Activated CD8-positive, alpha-beta T cell treated with anti-CD3 and anti-CD28 coated beads for 36 hours (primary cell): ENCODE measurements at regions of chr11 and their contacts with region 1.

Region 1: DNA sequence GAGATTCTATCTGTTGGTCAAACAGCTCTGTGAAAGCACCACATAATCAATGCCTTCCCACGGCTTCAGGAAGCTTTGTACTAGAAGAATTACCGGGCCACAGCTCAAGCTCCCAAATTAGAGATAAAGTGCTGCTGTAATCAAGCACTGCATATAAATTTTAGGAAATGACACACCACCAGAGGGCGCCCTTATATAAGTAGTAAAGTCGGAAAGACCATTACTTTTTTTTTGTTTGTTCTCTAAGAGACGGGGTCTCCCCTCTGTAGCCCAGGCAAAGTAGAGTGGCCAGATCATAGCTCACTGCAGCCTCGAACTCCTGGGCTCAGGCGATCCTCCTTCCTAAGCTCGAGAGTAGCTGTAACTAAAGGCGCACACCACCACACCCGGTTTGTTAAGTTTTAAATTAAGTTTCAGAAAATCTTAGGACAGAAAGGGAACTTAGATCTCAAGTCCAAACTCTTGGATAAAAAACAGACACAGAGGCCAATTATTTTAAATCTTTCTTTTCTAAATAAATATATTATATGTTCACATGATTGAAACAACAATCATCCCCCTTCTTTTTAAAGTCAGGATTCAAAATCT is 32.6 kb downstream of the PRCP start:
- DNase-seq: peak; percentile 93
- ATAC-seq: peak; percentile 73
- H3K4me3 Mint-ChIP-seq: peak overlapping the region; percentile 17
- H3K27ac Mint-ChIP-seq: no peak overlapping the region
- H3K4me1 Mint-ChIP-seq: peaks cover 22% of the 10 kb centered on the region
- H3K27me3 Mint-ChIP-seq: no peaks in the 10 kb centered on the region
- CTCF ChIP-seq: peak; percentile 85

Region 2: DNA sequence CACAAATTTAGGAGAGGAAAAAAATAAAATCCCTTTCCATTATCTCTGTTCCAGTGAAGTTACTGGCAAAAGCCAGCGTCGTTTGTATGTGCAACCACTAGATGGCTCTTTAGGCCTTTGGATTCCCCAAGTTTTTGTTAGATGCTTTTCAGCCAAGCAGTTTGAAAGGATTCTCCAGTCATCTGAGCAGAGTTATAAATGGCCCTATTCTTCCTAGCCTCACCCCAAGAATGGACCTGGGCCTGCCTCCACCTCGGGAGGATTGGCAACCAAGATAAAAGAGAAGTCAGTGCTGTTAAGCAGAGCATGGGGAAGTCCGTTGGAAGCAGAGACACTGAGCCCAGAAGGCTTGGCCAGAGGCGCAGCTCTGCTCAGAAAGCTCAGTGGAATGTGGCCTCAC is 149.3 kb before region 1 on chr11:
- CTCF ChIA-PET with region 1: interaction called, 23 read pairs
- POLR2A ChIA-PET with region 1: no interaction called
- intact Hi-C with region 1: loop called (anchors 2 kb)
- DNase-seq: peak; percentile 34
- ATAC-seq: peak; percentile 45
- H3K4me3 Mint-ChIP-seq: no peak overlapping the region
- H3K27ac Mint-ChIP-seq: no peak overlapping the region
- H3K4me1 Mint-ChIP-seq: no peaks in the 10 kb centered on the region
- H3K27me3 Mint-ChIP-seq: peaks cover 1% of the 10 kb centered on the region
- CTCF ChIP-seq: peak; percentile 78

Region 3: DNA sequence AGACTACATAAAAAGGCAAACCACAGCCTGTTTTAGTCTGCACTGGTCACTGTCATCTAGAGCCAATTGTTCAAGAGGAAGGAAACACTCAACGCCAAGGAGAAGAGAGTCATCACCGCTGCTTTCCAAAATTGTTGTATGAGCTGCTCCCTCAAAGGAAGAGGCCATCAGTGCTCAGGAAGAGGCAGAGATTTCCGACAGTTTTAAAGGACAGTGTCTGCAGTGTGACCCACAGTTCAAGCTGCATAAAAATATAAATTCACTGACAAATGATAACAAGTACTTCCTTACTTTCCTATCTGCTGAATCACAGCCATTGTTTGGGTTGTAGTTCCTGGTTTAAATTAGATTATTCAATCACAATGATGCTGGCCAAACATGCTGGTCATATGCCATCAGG is 16.3 kb after region 1 on chr11:
- CTCF ChIA-PET with region 1: interaction called, 37 read pairs
- POLR2A ChIA-PET with region 1: interaction called, 3 read pairs
- intact Hi-C with region 1: no loop called
- DNase-seq: no peak
- ATAC-seq: no peak
- H3K4me3 Mint-ChIP-seq: no peak overlapping the region
- H3K27ac Mint-ChIP-seq: no peak overlapping the region
- H3K4me1 Mint-ChIP-seq: peaks cover 5% of the 10 kb centered on the region
- H3K27me3 Mint-ChIP-seq: no peaks in the 10 kb centered on the region
- CTCF ChIP-seq: no peak

Region 4: DNA sequence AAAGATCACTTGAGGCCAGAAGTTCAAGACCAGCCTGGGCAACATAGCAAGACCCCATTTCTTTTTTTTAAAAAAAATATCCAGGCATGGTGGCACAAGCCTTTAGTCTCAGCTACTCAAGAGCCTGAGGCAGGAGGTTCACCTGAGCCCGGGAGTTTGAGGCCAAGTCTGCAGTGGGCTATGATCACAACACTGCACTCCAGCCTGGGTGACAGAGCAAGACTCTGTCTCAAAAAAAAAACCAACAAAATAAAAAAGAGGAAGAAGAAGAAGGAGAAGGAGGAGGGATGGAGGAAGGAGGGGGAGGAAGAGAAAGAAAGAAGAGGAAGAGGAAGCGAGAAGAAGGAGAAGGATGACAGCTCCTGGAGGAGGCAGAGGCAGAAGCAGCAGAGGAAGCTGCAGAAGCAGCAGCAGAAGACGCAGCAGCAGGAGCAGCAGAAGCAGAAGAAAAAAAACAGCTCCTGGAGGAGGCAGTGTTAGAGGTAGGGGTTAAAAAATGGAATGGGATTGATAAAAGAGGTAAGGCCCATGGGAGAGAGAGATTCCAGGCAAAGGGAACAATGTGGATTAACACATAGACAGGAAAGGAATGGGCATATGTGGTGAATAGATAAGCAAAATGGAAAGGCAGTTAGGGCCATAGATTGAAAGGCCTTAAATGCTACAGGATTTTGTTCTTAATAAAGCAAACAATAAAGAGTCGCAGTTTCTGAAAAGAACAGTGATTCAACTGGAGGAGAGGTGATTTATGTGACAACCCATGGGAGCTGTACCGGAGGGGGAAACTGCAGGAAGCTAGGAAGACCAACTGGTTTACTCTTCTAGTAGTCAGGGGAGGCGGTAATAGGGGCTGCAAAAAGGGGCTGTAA is 21.8 kb after region 1 on chr11:
- CTCF ChIA-PET with region 1: interaction called, 37 read pairs
- POLR2A ChIA-PET with region 1: no interaction called
- intact Hi-C with region 1: no loop called
- DNase-seq: no peak
- ATAC-seq: no peak
- H3K4me3 Mint-ChIP-seq: no peak overlapping the region
- H3K27ac Mint-ChIP-seq: no peak overlapping the region
- H3K4me1 Mint-ChIP-seq: peaks cover 8% of the 10 kb centered on the region
- H3K27me3 Mint-ChIP-seq: no peaks in the 10 kb centered on the region
- CTCF ChIP-seq: no peak

Region 5: DNA sequence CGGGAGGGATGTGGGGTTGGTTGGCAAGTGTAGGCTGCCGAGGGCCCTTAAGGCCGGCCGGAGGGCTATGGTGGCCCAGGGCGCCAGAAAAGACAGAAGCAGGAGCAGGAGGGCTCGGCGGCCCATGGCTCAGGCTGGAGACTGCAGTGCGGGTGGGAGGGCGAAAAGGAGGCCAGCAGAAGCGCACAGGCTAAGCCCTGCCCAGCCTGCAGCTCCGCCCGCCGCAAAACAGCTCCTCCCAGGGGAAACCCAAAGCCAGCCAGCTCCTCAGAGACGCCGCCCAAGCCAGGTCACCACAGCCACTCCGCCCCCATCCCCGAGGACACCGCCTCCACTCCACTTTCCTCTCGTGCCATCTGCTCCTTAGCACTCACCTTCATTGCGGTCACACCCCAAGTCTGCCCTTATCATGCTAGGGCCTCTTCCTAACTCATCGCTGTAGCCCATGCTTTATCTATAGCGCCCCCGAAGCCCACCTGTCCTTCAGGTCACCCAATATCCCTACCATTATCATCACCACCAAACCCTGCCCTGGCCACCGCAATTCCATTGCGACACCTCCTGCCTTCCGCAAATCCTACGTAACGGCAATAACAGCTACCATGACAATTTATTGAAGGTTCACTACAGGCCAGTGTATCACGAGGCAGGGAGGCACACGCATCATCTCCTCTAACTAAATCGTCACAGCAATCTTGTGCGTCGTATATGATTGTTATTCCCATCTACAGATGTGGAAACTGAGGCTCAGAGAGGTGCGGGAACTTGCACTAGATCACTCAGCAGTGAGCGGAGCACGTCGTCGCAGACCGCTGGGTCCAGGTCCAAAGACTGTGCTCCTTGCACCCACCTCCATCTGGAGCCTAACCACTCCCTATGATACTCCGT is 32.9 kb after region 1 on chr11 and contains the start of gene PRCP:
- CTCF ChIA-PET with region 1: interaction called, 67 read pairs
- POLR2A ChIA-PET with region 1: no interaction called
- intact Hi-C with region 1: loop called (anchors 5 kb)
- DNase-seq: peak; percentile 98
- ATAC-seq: peak; percentile 80
- H3K4me3 Mint-ChIP-seq: peak within 1 kb of the TSS; percentile 79
- H3K27ac Mint-ChIP-seq: peak within 1 kb of the TSS; percentile 98
- H3K4me1 Mint-ChIP-seq: peaks cover 56% of the 10 kb centered on the region
- H3K27me3 Mint-ChIP-seq: no peaks in the 10 kb centered on the region
- CTCF ChIP-seq: no peak
- total RNA-seq, gene PRCP: 21.8 to 29.9 TPM

Region 6: DNA sequence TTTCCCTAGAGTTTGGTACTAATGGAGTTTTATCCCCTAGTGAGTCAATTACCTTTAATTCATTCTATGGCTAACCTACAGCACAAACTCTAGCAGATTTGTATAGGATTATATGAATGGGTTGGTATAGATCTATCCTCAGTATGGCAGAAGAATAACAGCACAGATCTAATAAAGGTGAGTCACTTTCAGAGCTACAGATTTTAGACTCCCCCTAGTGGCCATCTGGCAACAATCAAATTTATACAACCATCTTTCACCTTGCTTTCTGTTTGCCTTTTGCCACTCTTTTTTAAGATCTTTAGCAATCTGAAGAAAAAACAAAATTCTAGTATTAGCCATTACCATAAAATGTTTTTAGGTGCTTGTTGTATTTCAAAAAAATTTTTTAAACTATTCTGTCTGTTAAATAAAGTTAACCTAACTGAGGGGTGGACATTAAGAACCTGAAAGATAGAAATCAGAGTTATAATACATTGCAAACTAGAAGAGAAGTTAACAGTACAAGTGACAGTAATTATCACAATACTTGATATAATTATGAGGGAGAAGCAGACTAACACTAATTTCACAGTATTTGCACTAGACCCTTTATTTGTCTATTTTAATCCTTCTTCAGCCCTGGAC is 59.8 kb after region 1 on chr11:
- CTCF ChIA-PET with region 1: interaction called, 11 read pairs
- POLR2A ChIA-PET with region 1: no interaction called
- intact Hi-C with region 1: no loop called
- DNase-seq: peak; percentile 27
- ATAC-seq: peak; percentile 82
- H3K4me3 Mint-ChIP-seq: no peak overlapping the region
- H3K27ac Mint-ChIP-seq: peak overlapping the region; percentile 43
- H3K4me1 Mint-ChIP-seq: peaks cover 37% of the 10 kb centered on the region
- H3K27me3 Mint-ChIP-seq: no peaks in the 10 kb centered on the region
- CTCF ChIP-seq: peak; percentile 86

Region 7: GRCh38 chr11:83025267-83025720 is 157.7 kb after region 1 on chr11:
- CTCF ChIA-PET with region 1: no interaction called
- POLR2A ChIA-PET with region 1: no interaction called
- intact Hi-C with region 1: no loop called
- DNase-seq: no peak
- ATAC-seq: no peak
- H3K4me3 Mint-ChIP-seq: no peak overlapping the region
- H3K27ac Mint-ChIP-seq: no peak overlapping the region
- H3K4me1 Mint-ChIP-seq: peaks cover 31% of the 10 kb centered on the region
- H3K27me3 Mint-ChIP-seq: no peaks in the 10 kb centered on the region
- CTCF ChIP-seq: no peak

Region 8: GRCh38 chr11:83249972-83250593 is 382.5 kb after region 1 on chr11:
- CTCF ChIA-PET with region 1: interaction called, 57 read pairs
- POLR2A ChIA-PET with region 1: no interaction called
- intact Hi-C with region 1: loop called (anchors 5 kb)
- DNase-seq: peak; percentile 12
- ATAC-seq: peak; percentile 88
- H3K4me3 Mint-ChIP-seq: no peak overlapping the region
- H3K27ac Mint-ChIP-seq: no peak overlapping the region
- H3K4me1 Mint-ChIP-seq: no peaks in the 10 kb centered on the region
- H3K27me3 Mint-ChIP-seq: no peaks in the 10 kb centered on the region
- CTCF ChIP-seq: peak; percentile 83